ENCODE measurements at regions of chr5 and their contacts with region 1.

Region 1: GRCh38 chr5:63135291-63135690 is 556.7 kb downstream of the LRRC70 start:
- DNase-seq: no peak
- ATAC-seq: no peak

Region 2: DNA sequence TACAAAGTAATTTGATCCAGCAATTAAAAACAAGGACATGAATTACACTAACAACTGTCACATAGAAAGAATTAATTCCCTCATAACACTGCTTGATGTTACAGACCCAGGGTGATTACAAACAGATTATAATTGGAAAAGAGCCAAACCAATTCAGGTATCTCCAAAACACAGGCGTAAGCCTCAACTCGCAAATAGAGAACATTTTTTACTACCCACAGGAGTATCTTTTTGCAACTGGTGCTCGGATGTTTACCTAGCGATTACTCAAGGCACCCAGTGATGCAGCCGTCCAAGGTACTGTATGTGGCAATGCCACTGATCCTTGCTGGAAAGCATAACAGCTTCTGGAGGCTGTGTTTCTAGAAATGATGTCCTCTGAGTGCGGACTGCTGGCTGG is 1215.4 kb before region 1 on chr5:
- intact Hi-C with region 1: loop called (anchors 5 kb)
- DNase-seq: no peak
- ATAC-seq: peak; percentile 55